AG04450 (cell line): ENCODE measurements at regions of chr5 and their contacts with region 1.

Region 1: DNA sequence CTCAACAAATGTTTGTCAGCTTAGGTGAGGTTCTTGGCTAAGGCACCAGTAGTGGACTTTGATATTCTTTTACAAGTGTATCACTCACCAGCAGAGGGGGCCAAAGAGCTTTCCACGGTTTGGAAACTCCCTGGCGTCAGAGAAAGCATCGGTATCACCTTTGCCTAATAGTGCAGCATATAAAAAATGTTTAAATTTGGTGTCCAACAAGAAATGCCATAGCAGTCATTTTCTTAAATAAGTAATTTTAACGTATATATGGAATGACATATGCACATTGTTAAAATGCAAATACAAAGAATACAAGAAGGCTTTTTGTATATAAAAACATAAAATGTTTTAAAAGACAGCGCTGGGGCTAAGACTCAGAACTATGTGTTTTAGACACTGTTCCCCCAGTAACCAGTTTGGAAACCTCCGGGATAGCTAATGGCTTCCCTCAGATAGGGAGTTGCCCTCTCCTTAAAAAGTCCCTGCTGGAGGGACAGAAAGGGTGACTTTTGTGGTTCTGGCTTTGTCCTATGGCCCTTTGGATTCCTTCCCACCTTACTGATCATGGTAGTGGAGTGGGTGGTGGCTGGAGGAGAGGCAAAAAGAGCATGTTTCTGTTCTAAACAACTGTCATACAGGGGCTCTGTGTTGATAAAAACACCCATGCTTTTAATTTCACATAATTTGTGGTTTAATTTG is 124.6 kb downstream of the GPBP1 start:
- DNase-seq: peak; percentile 73
- H3K4me3 ChIP-seq: no peak overlapping the region
- H3K27ac ChIP-seq: no peak overlapping the region
- H3K27me3 ChIP-seq: no peaks in the 10 kb centered on the region
- CTCF ChIP-seq: peak; percentile 88

Region 2: GRCh38 chr5:56900858-56901578 is 397.4 kb before region 1 on chr5:
- CTCF ChIA-PET with region 1: interaction called, 10 read pairs
- POLR2A ChIA-PET with region 1: no interaction called
- DNase-seq: no peak
- H3K4me3 ChIP-seq: no peak overlapping the region
- H3K27ac ChIP-seq: no peak overlapping the region
- H3K27me3 ChIP-seq: no peaks in the 10 kb centered on the region
- CTCF ChIP-seq: peak; percentile 64

Region 3: DNA sequence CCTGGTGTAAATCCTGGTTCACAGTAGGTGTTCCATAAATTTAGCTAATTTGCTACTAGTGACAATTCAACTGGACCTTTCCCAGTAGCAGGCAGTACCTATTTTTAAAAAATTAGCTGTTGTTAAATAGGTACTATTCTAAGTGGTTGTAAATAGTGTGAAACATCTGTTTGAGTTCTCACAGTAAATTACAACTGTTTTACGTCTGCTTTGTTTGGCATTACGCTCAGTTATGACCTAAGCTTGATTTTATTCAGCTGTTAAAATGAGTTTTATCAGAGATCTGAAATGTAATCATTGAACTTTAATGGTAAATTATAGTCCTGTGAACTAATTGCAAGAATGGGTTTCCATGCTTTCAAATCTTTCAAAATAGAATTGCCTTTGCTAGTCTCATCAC is 30.6 kb before region 1 on chr5:
- CTCF ChIA-PET with region 1: no interaction called
- POLR2A ChIA-PET with region 1: no interaction called
- DNase-seq: no peak
- H3K4me3 ChIP-seq: no peak overlapping the region
- H3K27ac ChIP-seq: no peak overlapping the region
- H3K27me3 ChIP-seq: no peaks in the 10 kb centered on the region
- CTCF ChIP-seq: no peak

Region 4: GRCh38 chr5:57499262-57500050 is 201.0 kb after region 1 on chr5:
- CTCF ChIA-PET with region 1: interaction called, 22 read pairs
- POLR2A ChIA-PET with region 1: no interaction called
- DNase-seq: no peak
- H3K4me3 ChIP-seq: no peak overlapping the region
- H3K27ac ChIP-seq: no peak overlapping the region
- H3K27me3 ChIP-seq: no peaks in the 10 kb centered on the region
- CTCF ChIP-seq: peak; percentile 77

Region 5: GRCh38 chr5:57791875-57792274 is 493.4 kb after region 1 on chr5:
- CTCF ChIA-PET with region 1: interaction called, 10 read pairs
- POLR2A ChIA-PET with region 1: no interaction called
- DNase-seq: no peak
- H3K4me3 ChIP-seq: no peak overlapping the region
- H3K27ac ChIP-seq: no peak overlapping the region
- H3K27me3 ChIP-seq: no peaks in the 10 kb centered on the region
- CTCF ChIP-seq: no peak

Region 6: GRCh38 chr5:58407042-58407719 is 1108.7 kb after region 1 on chr5:
- CTCF ChIA-PET with region 1: no interaction called
- POLR2A ChIA-PET with region 1: no interaction called
- DNase-seq: peak; percentile 55
- H3K4me3 ChIP-seq: no peak overlapping the region
- H3K27ac ChIP-seq: peak overlapping the region; percentile 65
- H3K27me3 ChIP-seq: no peaks in the 10 kb centered on the region
- CTCF ChIP-seq: no peak

Region 7: GRCh38 chr5:58455066-58455465 is 1156.6 kb after region 1 on chr5:
- CTCF ChIA-PET with region 1: interaction called, 123 read pairs
- POLR2A ChIA-PET with region 1: interaction called, 9 read pairs
- DNase-seq: no peak
- H3K4me3 ChIP-seq: peak overlapping the region; percentile 94
- H3K27ac ChIP-seq: no peak overlapping the region
- H3K27me3 ChIP-seq: no peaks in the 10 kb centered on the region
- CTCF ChIP-seq: no peak

Region 8: GRCh38 chr5:58466939-58467338 is 1168.5 kb after region 1 on chr5:
- CTCF ChIA-PET with region 1: interaction called, 123 read pairs
- POLR2A ChIA-PET with region 1: no interaction called
- DNase-seq: no peak
- H3K4me3 ChIP-seq: no peak overlapping the region
- H3K27ac ChIP-seq: no peak overlapping the region
- H3K27me3 ChIP-seq: no peaks in the 10 kb centered on the region
- CTCF ChIP-seq: peak; percentile 18; the same call in 1 of the 2 replicates